K562 (cell line): ENCODE measurements at regions of chr2 and their contacts with region 1.

Region 1: GRCh38 chr2:88691339-88692183 is at the start of gene RPIA:
- DNase-seq: peak; percentile 96 to 99 (median 96)
- ATAC-seq: peak; percentile 97
- H3K4me3 ChIP-seq: peak within 1 kb of the TSS; percentile 80
- H3K27ac ChIP-seq: peak within 1 kb of the TSS; percentile 79
- H3K4me1 ChIP-seq: peaks cover 5 to 12% of the 10 kb centered on the region in 2 experiments; a peak in 4 of 5 replicates
- H3K27me3 ChIP-seq: no peaks in the 10 kb centered on the region
- CTCF ChIP-seq: peak; percentile 81 to 96 (median 95)
- EP300 ChIP-seq: no peak; the same call in 1 of the 2 replicates
- POLR2A ChIP-seq: peak; percentile 85
- RAD21 ChIP-seq: peak; percentile 41 to 56
- polyA plus RNA-seq, gene RPIA: 7.8 to 15.1 TPM

Region 2: DNA sequence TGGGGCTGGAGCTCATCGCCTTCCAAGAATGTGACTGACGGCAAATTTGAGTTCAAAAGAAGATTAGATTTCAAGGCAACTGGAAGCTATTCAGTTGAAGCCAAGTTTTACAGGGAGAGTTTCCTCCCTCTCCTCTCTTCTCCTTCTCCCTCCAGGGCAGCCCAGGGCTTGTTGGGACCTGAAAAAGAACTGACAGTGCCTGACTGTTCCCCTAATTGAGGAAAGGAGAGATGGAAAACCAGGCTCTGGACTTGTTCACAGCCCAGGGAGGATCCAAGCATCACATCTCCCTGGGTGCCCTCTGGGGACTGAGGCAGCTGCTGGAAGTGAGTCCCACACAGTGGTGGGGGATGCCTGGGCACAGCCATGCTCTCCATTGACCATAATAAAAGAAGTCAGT is 433.4 kb before region 1 on chr2:
- CTCF ChIA-PET with region 1: no interaction called
- POLR2A ChIA-PET with region 1: no interaction called
- in situ Hi-C with region 1: no loop called
- intact Hi-C with region 1: loop called (anchors 10 kb)
- DNase-seq: no peak
- ATAC-seq: no peak
- H3K4me3 ChIP-seq: no peak overlapping the region
- H3K27ac ChIP-seq: no peak overlapping the region
- H3K4me1 ChIP-seq: peaks cover 0 to 4% of the 10 kb centered on the region in 2 experiments; a peak in 1 of 5 replicates
- H3K27me3 ChIP-seq: peaks cover 32 to 47% of the 10 kb centered on the region in 2 experiments
- CTCF ChIP-seq: no peak
- EP300 ChIP-seq: no peak
- POLR2A ChIP-seq: no peak
- RAD21 ChIP-seq: no peak

Region 3: GRCh38 chr2:88398180-88398579 is 293.4 kb before region 1 on chr2:
- CTCF ChIA-PET with region 1: no interaction called
- POLR2A ChIA-PET with region 1: no interaction called
- in situ Hi-C with region 1: no loop called
- intact Hi-C with region 1: no loop called
- DNase-seq: no peak
- ATAC-seq: no peak
- H3K4me3 ChIP-seq: no peak overlapping the region
- H3K27ac ChIP-seq: no peak overlapping the region
- H3K4me1 ChIP-seq: no peaks in the 10 kb centered on the region
- H3K27me3 ChIP-seq: peaks cover 8 to 9% of the 10 kb centered on the region in 2 experiments; a peak in 4 of 5 replicates
- CTCF ChIP-seq: no peak
- EP300 ChIP-seq: no peak
- POLR2A ChIP-seq: no peak
- RAD21 ChIP-seq: no peak